Transverse colon (tissue), 4 donors: ENCODE measurements at regions of chr13 and their contacts with region 1.

Region 1: GRCh38 chr13:79258489-79258888 is 147.6 kb downstream of the RBM26 start:
- DNase-seq: no peak
- H3K4me3 ChIP-seq: no peak overlapping the region
- H3K27ac ChIP-seq: no peak overlapping the region
- H3K4me1 ChIP-seq: no peaks in the 10 kb centered on the region
- H3K27me3 ChIP-seq: no peaks in the 10 kb centered on the region
- CTCF ChIP-seq: no peak
- EP300 ChIP-seq: no peak
- POLR2A ChIP-seq: no peak

Region 2: GRCh38 chr13:79227418-79227817 is 31.1 kb before region 1 on chr13:
- in situ Hi-C with region 1: no loop called
- intact Hi-C with region 1: no loop called
- DNase-seq: no peak
- H3K4me3 ChIP-seq: no peak overlapping the region
- H3K27ac ChIP-seq: no peak overlapping the region
- H3K4me1 ChIP-seq: peaks cover 0 to 29% (median 8%) of the 10 kb centered on the region in 4 donors
- H3K27me3 ChIP-seq: no peaks in the 10 kb centered on the region
- CTCF ChIP-seq: no peak
- EP300 ChIP-seq: no peak
- POLR2A ChIP-seq: no peak

Region 3: GRCh38 chr13:79311386-79311785 is 52.9 kb after region 1 on chr13:
- in situ Hi-C with region 1: loop called in 1 of 4 experiments (anchors 10 kb)
- intact Hi-C with region 1: no loop called
- DNase-seq: no peak
- H3K4me3 ChIP-seq: no peak overlapping the region
- H3K27ac ChIP-seq: no peak overlapping the region
- H3K4me1 ChIP-seq: no peaks in the 10 kb centered on the region
- H3K27me3 ChIP-seq: no peaks in the 10 kb centered on the region
- CTCF ChIP-seq: no peak
- EP300 ChIP-seq: no peak
- POLR2A ChIP-seq: no peak

Region 4: GRCh38 chr13:79480954-79481684 is 222.6 kb after region 1 on chr13 and contains the start of gene NDFIP2:
- in situ Hi-C with region 1: no loop called
- intact Hi-C with region 1: no loop called
- DNase-seq: peak; percentile 92
- H3K4me3 ChIP-seq: peak within 1 kb of the TSS; percentile 39 to 83 (median 72)
- H3K27ac ChIP-seq: peak within 1 kb of the TSS; percentile 86 to 89 (median 88)
- H3K4me1 ChIP-seq: peaks cover 15 to 43% (median 30%) of the 10 kb centered on the region in 4 donors
- H3K27me3 ChIP-seq: no peaks in the 10 kb centered on the region
- CTCF ChIP-seq: no peak
- EP300 ChIP-seq: no peak
- POLR2A ChIP-seq: peak; percentile 91
- total RNA-seq, gene NDFIP2: 56.9 to 116 (median 83.6) TPM